ENCODE measurements at regions of chr2 and their contacts with region 1.

Region 1: GRCh38 chr2:170973492-170974303 is 44.6 kb downstream of the GORASP2 start:
- DNase-seq: peak; percentile 63 to 97 (median 82)

Region 2: DNA sequence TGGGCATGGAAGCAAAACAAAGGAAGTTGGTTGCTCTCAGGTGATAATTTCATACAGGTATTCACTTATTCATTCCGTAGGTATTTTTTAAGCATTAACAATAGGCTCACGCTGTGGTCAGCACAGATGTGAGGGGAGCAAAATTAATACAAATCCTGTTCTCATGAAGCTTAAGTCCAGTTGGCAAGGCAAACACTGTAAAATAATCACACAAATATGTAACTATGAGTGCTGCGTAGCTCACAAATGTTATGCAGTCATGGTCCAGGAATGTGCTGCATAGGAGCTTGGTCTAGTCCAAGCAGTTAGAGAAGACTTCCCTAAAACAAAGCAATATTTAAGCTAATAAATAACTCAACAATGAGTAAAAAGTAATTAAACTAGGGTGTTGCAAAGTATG is 234.7 kb before region 1 on chr2:
- intact Hi-C with region 1: no loop called
- DNase-seq: no peak

Region 3: DNA sequence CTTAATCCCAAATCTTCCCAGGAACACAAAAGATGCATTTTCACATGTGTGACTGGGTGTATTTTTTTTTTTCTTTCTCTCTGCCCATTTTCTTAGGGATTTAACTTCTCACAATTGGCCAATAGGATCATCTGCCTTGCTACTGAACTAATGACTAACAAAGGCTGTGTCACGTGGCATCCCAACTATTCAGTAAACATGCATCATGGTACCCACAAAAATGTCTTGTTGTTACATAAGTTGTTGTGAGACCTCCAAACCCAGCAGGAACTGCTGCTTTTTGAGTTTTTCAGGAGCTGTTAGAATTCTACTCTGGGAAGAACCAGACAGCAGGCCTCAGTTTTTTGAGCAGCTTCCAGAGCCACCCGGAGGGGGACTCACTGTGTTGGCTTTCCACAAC is 125.1 kb before region 1 on chr2:
- intact Hi-C with region 1: no loop called
- DNase-seq: no peak

Region 4: DNA sequence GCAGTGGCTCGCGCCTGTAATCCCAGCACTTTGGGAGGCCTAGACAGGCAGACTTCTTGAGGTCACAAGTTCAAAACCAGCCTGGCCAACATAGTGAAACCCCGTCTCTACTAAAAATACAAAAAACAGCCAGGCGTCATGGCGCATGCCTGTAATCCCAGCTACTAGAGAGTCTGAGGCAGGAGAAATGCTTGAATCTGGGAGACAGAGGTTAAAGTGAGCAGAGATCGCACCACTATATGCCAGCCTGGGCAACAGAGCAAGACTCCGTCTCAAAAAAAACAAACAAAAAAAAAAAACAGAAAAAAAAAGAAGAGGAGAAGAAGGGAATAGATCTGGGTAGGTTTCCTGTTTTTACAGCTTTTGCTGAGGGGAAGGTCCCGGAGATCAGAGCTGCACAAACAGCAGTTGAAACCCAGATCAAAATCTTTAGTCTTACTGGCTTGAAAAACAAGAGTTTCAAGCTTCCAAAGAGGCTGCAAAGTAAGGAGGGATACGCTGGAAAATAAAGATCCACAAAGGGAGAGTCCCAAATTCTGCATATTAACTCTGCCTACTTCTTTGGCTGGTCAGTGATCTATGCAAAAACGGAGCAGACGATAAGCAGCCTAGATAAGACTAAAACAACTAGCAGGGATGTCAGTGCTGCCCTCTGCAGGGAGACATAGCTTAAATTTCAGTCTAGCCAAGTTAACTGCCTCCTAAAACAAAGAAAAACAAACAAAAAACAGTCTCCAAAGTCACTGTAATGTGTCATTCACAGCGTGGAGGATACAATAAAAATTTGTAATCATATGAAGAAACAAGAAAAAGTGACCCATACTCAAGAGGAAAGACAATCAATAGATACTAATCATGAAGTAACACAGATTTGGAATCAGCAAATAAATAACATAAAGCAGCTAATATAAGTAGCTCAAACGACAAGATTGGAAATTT is 112.9 kb after region 1 on chr2:
- intact Hi-C with region 1: loop called (anchors 5 kb)
- DNase-seq: peak in 5 of 10 donors; percentile 11 to 46 (median 24)

Region 5: DNA sequence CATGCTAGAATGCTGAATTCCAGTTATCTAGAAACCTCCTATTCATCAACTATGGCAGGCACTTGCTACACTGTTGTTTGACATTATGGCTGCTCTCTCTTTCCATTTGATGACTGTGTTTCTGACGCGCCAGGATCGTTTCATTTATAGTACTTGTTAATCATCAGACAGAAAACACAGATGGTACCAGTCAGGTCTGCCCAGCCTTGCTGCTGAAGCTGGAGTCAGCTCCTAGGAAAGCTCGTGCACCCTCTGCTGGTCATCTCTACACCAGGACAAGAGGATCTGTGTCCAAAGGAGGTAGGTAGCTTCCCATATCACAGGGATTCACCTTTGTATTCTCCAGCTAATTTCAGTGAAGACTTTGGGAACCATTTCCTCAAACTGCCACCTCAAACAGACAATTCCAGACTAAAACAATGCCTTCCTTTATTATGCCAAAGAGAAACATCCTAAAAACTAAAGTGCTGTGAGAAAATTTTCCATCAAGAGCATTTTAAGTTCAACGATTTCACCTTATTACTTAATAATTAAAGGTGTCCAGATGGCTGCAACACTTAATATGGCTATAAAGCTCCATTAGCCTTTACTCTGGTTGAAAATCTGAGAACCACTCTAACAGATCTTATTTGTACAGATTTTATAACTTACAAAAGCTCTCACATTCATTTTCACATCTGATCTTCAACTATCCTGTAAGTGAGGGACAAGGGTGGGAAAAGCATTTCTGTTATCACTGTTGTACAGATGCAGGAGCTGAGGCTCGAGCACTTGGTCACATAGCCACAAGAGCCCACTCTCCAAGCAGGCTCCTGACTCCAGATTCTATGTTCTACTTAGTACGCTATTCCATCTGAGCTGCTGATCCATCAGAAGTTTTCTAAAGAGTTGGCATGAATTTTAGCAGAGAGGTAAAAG is 442.6 kb after region 1 on chr2:
- intact Hi-C with region 1: loop called (anchors 1 kb)
- DNase-seq: peak; percentile 75 to 98 (median 90)

Region 6: GRCh38 chr2:171433763-171434670 is 460.3 kb after region 1 on chr2 and contains the starts of genes DCAF17 and METTL8:
- intact Hi-C with region 1: loop called (anchors 5 kb)
- DNase-seq: peak; percentile 93 to 99 (median 96)

Measured in posterior cingulate gyrus (tissue), 11 donors.